ENCODE measurements at regions of chr19 and their contacts with region 1.

Region 1: GRCh38 chr19:43743022-43743421 is 11.7 kb downstream of the SMG9 start:
- DNase-seq: no peak
- ATAC-seq: no peak
- H3K4me3 ChIP-seq: no peak overlapping the region
- H3K27ac ChIP-seq: no peak overlapping the region
- H3K4me1 ChIP-seq: no peaks in the 10 kb centered on the region
- H3K27me3 ChIP-seq: no peaks in the 10 kb centered on the region

Region 2: DNA sequence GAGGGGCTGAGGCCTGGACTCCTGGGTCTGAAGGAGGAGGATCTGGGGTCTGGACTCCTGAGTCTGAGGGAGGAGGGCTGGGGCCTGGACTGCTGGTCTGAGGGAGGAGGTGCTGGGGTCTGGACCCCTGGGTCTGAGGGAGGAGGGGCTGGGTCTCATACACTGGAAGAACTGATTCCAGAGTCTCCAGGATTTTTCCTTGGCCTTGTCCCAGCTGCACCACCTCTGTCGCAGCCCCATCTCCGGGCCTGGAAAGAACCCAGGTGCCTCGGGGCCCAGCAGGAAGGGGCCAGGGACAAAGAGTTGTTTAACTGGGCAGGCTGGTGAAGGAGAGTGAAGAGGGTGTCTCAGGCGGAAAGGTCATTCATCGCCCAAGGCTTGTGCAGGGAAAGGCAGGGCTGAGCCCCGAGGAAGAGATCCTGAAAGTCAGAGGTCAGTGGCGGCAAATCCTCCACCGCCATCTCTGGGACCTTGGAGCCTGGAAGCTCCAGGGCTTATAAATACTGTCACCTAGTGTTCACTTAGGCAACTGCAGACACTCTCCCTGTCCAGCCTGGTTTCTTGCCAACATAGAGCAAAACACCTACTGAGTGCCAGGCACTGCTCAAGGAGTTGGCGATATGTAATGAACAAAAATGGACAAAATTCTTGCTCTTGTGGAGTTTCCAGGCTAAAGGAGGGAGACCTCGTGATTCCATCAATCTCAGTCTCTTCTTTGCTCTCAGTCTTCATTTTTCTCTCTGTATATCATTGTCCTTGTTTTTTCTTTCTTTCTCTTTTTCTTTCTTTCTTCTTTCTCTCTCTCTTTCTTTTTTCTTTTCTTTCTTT is 42.2 kb after region 1 on chr19:
- intact Hi-C with region 1: loop called (anchors 2 to 5 kb)
- DNase-seq: peak; percentile 58 to 77 (median 71)
- ATAC-seq: peak; percentile 69 to 83
- H3K4me3 ChIP-seq: no peak overlapping the region
- H3K27ac ChIP-seq: no peak overlapping the region
- H3K4me1 ChIP-seq: no peaks in the 10 kb centered on the region
- H3K27me3 ChIP-seq: no peaks in the 10 kb centered on the region

Measured in right cardiac atrium (tissue), 5 donors.